Common myeloid progenitor, CD34-positive (primary cell): ENCODE measurements at regions of chr2 and their contacts with region 1.

Region 1: GRCh38 chr2:47069628-47070154 is 85.4 kb downstream of the STPG4 start:
- DNase-seq: no peak
- H3K4me3 ChIP-seq: no peak overlapping the region
- H3K27ac ChIP-seq: no peak overlapping the region
- H3K4me1 ChIP-seq: peaks cover 0 to 59% (median 54%) of the 10 kb centered on the region in 4 experiments
- H3K27me3 ChIP-seq: no peaks in the 10 kb centered on the region

Region 2: DNA sequence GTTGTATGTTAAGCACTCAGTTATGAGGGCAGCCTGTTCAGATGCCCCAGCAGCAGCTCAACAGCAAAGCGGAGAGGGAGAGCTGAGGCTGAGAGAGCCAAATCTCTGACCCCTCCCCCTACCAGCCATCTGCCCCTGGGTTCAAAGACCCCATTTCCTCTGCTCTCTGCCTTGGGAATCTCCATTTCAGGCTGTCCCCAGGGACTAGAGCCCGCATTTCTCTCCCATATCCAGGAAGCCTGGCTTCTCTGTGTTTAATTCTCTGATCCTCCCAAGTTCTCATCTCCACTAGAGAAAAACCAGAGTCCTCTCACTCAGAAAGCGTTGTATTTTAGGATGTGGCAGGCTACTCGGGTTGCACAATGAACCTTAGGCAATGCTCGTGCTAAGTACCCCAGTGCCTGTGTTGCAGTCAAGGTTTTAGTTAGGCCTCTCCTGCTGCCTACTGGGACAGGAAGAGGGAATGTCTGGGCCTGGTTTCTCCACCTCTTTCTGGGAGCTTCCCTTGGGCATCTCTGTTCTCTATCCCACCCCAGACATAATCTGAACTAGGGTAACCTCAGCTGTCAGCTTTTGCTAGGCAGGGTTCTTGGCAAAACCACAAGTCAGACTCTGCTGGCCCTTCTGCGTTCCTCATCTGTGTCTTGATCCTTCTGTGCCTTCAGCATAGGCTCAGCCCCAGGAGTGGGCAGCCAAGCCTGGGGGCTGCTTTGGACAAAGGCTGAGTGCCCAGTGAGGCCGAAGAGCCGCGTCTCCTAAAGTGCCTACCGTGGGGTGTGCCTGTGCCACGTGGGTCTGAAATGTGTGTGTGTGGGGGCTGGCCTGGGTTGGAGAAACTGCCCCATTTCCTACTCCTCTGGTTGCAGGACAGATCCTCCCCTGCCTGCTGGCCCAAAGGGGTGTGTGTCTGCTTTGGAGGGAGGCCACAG is 11.4 kb before region 1 on chr2:
- CTCF ChIA-PET with region 1: interaction called, 11 read pairs
- POLR2A ChIA-PET with region 1: no interaction called
- DNase-seq: peak in 1 of 3 donors; percentile 20
- H3K4me3 ChIP-seq: peak overlapping the region in 2 of 7 experiments; percentile 17 to 40
- H3K27ac ChIP-seq: no peak overlapping the region
- H3K4me1 ChIP-seq: peaks cover 7 to 44% (median 36%) of the 10 kb centered on the region in 4 experiments
- H3K27me3 ChIP-seq: no peaks in the 10 kb centered on the region